Activated CD4-positive, alpha-beta T cell treated with anti-CD3 and anti-CD28 coated beads, Interleukin-2, amount 10 ng/mL, durations not matched to agents 24 days and 14 days (primary cell): ENCODE measurements at regions of chr12 and their contacts with region 1.

Region 1: DNA sequence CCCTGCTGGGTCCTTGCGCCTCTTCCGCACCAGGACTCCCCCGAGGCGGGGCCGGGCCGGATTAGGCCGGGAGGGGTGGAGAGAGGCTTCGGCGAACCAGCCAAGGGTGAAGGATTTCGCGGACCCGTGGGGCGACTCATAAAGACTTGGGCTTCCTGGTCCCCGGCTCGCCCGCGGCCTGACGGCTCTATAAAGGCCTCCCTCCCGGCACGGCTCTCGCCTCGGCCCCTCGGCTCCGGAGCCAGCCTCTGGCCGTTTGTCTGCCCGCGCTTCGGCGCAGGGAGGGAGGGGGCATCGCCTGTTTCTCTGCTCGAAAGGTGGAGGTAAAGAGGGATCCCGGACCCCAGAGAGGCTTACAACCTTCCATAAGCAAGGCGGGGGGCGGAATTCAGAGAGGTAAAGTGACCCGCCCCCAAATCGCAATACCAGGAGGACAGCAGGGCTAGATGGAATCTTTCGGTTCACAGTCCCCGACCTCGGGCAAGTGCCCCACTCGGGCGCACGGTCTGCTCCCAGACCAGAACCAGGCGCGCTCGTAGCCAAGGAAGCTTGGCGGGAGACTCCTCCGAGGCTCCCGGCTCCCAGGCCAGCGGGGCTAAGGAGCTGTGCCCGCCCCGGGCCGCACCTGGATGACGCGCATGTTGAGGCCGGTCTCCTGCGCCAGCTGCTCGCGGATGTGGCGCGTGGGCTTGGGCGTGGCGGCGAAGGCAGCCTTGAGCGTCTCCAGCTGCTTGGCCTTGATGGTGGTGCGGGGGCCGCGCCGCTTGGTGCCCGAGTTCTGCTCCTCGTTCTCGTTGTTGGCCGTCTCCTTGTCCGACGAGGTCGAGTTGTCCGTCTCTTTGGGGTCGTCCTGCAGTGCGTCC is 3.9 kb downstream of the LHX5 start:
- DNase-seq: no peak
- H3K4me3 Mint-ChIP-seq: no peak overlapping the region
- H3K27ac Mint-ChIP-seq: no peak overlapping the region
- H3K4me1 Mint-ChIP-seq: peaks cover 12% of the 10 kb centered on the region
- H3K27me3 Mint-ChIP-seq: peaks cover 71% of the 10 kb centered on the region

Region 2: GRCh38 chr12:113479590-113480335 is 12.0 kb after region 1 on chr12:
- intact Hi-C with region 1: loop called (anchors 2 kb)
- DNase-seq: peak; percentile 86
- H3K4me3 Mint-ChIP-seq: peak overlapping the region; percentile 28
- H3K27ac Mint-ChIP-seq: peak overlapping the region; percentile 88
- H3K4me1 Mint-ChIP-seq: peaks cover 6% of the 10 kb centered on the region
- H3K27me3 Mint-ChIP-seq: peaks cover 72% of the 10 kb centered on the region

Region 3: GRCh38 chr12:114408886-114409851 is 941.4 kb after region 1 on chr12:
- intact Hi-C with region 1: loop called (anchors 5 kb)
- DNase-seq: no peak
- H3K4me3 Mint-ChIP-seq: peak overlapping the region; percentile 26
- H3K27ac Mint-ChIP-seq: peak overlapping the region; percentile 63
- H3K4me1 Mint-ChIP-seq: no peaks in the 10 kb centered on the region
- H3K27me3 Mint-ChIP-seq: peaks cover 90% of the 10 kb centered on the region

Region 4: GRCh38 chr12:114447274-114447716 is 979.6 kb after region 1 on chr12:
- intact Hi-C with region 1: loop called (anchors 5 kb)
- DNase-seq: no peak
- H3K4me3 Mint-ChIP-seq: no peak overlapping the region
- H3K27ac Mint-ChIP-seq: no peak overlapping the region
- H3K4me1 Mint-ChIP-seq: peaks cover 1% of the 10 kb centered on the region
- H3K27me3 Mint-ChIP-seq: peaks cover 80% of the 10 kb centered on the region

Region 5: GRCh38 chr12:114668151-114668885 is 1200.6 kb after region 1 on chr12:
- intact Hi-C with region 1: loop called (anchors 2 kb)
- DNase-seq: peak; percentile 58
- H3K4me3 Mint-ChIP-seq: no peak overlapping the region
- H3K27ac Mint-ChIP-seq: peak overlapping the region; percentile 63
- H3K4me1 Mint-ChIP-seq: no peaks in the 10 kb centered on the region
- H3K27me3 Mint-ChIP-seq: peaks cover 71% of the 10 kb centered on the region

Region 6: DNA sequence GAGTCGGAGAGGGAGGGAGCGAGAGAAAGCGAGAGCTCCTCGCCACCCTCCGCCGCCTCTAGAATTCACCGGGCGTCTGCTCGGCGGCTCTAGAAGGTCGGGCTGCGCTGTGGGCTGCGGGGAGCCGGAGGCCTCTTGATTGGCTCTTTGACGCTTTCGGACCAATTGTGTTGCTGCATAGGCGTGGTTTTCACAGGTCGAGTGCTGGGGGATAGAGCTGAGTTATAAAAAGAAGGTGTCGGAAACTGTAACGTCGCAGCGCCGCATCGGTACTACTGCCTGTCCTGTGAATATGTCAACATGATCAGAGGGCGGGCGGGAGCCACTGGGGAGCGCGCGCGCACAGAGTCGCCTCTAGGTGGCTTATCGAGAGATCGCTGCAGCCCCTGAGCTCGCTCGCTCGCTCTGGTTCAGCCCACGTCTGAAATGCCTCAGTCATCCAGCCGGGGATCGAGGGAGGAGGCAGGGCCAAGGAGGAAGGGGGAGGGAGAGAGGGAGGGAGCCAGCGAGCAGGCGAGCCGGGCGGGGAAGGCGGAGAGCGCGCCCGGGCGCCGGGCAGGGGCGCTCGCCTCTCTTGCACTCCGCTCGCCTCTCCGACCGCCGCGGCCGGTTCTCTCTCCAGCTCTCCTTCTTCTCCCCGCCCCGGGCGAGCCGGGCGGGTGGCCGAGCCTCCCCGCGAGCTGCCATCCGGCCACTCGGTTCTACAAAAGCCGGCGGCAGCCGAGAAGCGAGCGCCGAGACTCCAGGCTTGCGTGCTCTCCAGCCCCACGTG is 1216.6 kb after region 1 on chr12 and contains the start of gene TBX3:
- intact Hi-C with region 1: loop called (anchors 5 kb)
- DNase-seq: peak; percentile 73
- H3K4me3 Mint-ChIP-seq: peak within 1 kb of the TSS; percentile 57
- H3K27ac Mint-ChIP-seq: peak within 1 kb of the TSS; percentile 81
- H3K4me1 Mint-ChIP-seq: peaks cover 10% of the 10 kb centered on the region
- H3K27me3 Mint-ChIP-seq: peaks cover 91% of the 10 kb centered on the region
- total RNA-seq, gene TBX3: not detected in 2 replicates